Activated CD4-positive, alpha-beta memory T cell treated with anti-CD3 and anti-CD28 coated beads, Interleukin-2, amount 10 ng/mL, durations not matched to agents 7 days and 5 days (primary cell): ENCODE measurements at regions of chr14 and their contacts with region 1.

Region 1: DNA sequence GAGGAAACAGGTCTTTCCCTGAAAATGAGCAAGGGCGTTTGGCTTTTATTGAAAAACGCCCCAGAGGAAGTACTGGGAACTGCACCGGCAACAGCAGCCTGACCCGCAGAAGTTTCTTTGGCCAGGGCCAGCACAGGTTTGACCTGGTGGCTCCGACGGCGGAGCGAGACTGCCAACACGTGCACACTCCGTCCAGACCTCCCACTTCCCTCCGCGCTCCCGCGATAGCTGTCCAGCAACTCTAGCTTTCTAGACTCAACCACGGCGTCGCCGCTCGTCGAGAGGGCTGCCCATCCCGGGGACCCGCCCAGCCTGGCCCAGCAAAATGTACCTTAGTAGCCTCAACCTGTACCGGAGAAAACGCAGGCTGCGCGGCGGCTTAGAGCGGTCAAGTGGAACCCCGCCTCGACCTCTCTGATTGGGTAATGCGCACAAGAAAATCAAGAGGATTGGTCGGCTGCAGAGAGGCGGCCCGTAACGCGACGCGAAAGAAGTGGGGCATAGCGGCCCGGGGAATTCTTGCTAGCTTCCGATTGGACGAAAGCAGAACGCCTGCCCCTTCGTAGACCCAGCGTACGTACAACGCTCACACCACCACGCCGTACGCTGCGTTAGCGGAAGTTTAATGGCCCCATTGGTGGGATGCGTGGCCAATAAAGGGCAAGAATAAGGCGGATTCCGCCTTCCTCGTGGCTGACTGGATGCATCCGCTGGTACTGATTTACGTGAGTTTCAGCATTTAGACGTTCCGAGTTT is at the start of gene WDR89:
- DNase-seq: peak; percentile 98
- H3K4me3 Mint-ChIP-seq: peak within 1 kb of the TSS; percentile 80
- H3K27ac Mint-ChIP-seq: peak within 1 kb of the TSS; percentile 89
- H3K4me1 Mint-ChIP-seq: peaks cover 38% of the 10 kb centered on the region
- H3K27me3 Mint-ChIP-seq: no peaks in the 10 kb centered on the region
- total RNA-seq, gene WDR89: 20.1 to 21.9 TPM

Region 2: GRCh38 chr14:63192085-63192484 is 449.6 kb before region 1 on chr14:
- CTCF ChIA-PET with region 1: no interaction called
- POLR2A ChIA-PET with region 1: no interaction called
- DNase-seq: no peak
- H3K4me3 Mint-ChIP-seq: no peak overlapping the region
- H3K27ac Mint-ChIP-seq: no peak overlapping the region
- H3K4me1 Mint-ChIP-seq: no peaks in the 10 kb centered on the region
- H3K27me3 Mint-ChIP-seq: peaks cover 4% of the 10 kb centered on the region

Region 3: GRCh38 chr14:63655789-63656573 is 14.3 kb after region 1 on chr14:
- CTCF ChIA-PET with region 1: interaction called, 8 read pairs
- POLR2A ChIA-PET with region 1: interaction called, 57 read pairs
- DNase-seq: no peak
- H3K4me3 Mint-ChIP-seq: no peak overlapping the region
- H3K27ac Mint-ChIP-seq: no peak overlapping the region
- H3K4me1 Mint-ChIP-seq: peaks cover 5% of the 10 kb centered on the region
- H3K27me3 Mint-ChIP-seq: no peaks in the 10 kb centered on the region

Region 4: GRCh38 chr14:63676318-63677014 is 34.8 kb after region 1 on chr14:
- CTCF ChIA-PET with region 1: no interaction called
- POLR2A ChIA-PET with region 1: no interaction called
- DNase-seq: no peak
- H3K4me3 Mint-ChIP-seq: no peak overlapping the region
- H3K27ac Mint-ChIP-seq: no peak overlapping the region
- H3K4me1 Mint-ChIP-seq: no peaks in the 10 kb centered on the region
- H3K27me3 Mint-ChIP-seq: no peaks in the 10 kb centered on the region